Activated CD4-positive, alpha-beta T cell treated with anti-CD3 and anti-CD28 coated beads, Interleukin-2, amount 10 ng/mL, durations not matched to agents 24 days and 14 days (primary cell): ENCODE measurements at regions of chr6 and their contacts with region 1.

Region 1: GRCh38 chr6:143629104-143630080 is 48.4 kb upstream of the PHACTR2 start:
- DNase-seq: no peak
- H3K4me3 Mint-ChIP-seq: peak overlapping the region; percentile 3
- H3K27ac Mint-ChIP-seq: peak overlapping the region; percentile 72
- H3K4me1 Mint-ChIP-seq: peaks cover 36% of the 10 kb centered on the region
- H3K27me3 Mint-ChIP-seq: no peaks in the 10 kb centered on the region

Region 2: GRCh38 chr6:143615785-143616184 is 13.6 kb before region 1 on chr6:
- intact Hi-C with region 1: loop called (anchors 1 kb)
- DNase-seq: no peak
- H3K4me3 Mint-ChIP-seq: no peak overlapping the region
- H3K27ac Mint-ChIP-seq: no peak overlapping the region
- H3K4me1 Mint-ChIP-seq: peaks cover 26% of the 10 kb centered on the region
- H3K27me3 Mint-ChIP-seq: no peaks in the 10 kb centered on the region